B cell (primary cell): ENCODE measurements at regions of chr2 and their contacts with region 1.

Region 1: DNA sequence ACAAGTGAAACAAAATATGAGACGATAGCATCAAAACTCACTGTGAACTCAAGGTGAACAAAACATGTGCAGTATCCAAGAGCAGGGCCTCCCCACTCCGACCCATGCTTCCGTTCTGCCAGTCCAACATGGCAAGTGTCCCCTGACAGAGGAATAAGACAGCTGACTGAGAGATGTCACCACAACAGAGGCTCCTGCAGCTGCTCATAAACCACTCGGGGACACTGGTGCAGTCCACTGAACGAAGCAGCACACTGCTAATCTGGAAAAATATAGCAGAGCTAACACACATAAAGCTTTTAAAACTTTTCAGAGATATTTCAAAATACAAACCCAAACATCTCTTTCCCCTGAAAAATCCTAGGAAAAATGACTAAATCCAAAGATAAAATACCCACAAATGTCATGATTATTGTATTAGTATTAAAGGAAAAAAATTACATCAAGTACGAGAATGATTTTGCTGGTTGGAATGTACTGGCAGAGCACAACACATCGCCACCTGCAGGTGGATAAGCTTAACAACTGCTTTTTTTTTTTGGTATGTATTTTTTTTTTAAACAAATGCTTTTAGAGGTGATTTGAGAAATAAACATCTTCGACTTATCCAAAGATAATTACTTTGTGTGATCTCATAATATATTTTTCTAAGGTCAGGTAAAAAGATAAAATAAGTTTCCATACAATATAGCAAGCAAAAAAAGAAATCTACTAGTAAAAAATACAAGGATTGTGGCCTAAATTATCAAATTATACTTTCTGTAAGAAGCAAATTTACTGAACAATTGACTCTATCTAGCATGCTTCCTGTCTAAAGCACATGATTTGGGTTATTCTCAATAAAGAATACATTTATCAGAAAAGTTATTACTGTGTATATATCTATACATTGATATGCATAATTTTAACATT is 18.6 kb downstream of the THADA start:
- DNase-seq: peak; percentile 60
- ATAC-seq: no peak
- H3K4me3 ChIP-seq: no peak overlapping the region
- H3K4me3 Mint-ChIP-seq: no peak overlapping the region
- H3K27ac ChIP-seq: no peak overlapping the region
- H3K27ac Mint-ChIP-seq: no peak overlapping the region
- H3K4me1 ChIP-seq: no peaks in the 10 kb centered on the region
- H3K4me1 Mint-ChIP-seq: no peaks in the 10 kb centered on the region
- H3K27me3 ChIP-seq: no peaks in the 10 kb centered on the region
- H3K27me3 Mint-ChIP-seq: no peaks in the 10 kb centered on the region
- CTCF ChIP-seq: peak; percentile 95

Region 2: GRCh38 chr2:42828487-42829425 is 748.5 kb before region 1 on chr2:
- CTCF ChIA-PET with region 1: interaction called, 10 read pairs
- POLR2A ChIA-PET with region 1: no interaction called
- intact Hi-C with region 1: loop called (anchors 1 kb)
- DNase-seq: peak; percentile 82
- ATAC-seq: peak; percentile 95
- H3K4me3 ChIP-seq: no peak overlapping the region
- H3K4me3 Mint-ChIP-seq: peak overlapping the region; percentile 39
- H3K27ac ChIP-seq: no peak overlapping the region
- H3K27ac Mint-ChIP-seq: peak overlapping the region; percentile 26
- H3K4me1 ChIP-seq: peaks cover 8 to 13% of the 10 kb centered on the region in 2 donors
- H3K4me1 Mint-ChIP-seq: peaks cover 16% of the 10 kb centered on the region
- H3K27me3 ChIP-seq: no peaks in the 10 kb centered on the region
- H3K27me3 Mint-ChIP-seq: peaks cover 3% of the 10 kb centered on the region
- CTCF ChIP-seq: peak; percentile 92

Region 3: DNA sequence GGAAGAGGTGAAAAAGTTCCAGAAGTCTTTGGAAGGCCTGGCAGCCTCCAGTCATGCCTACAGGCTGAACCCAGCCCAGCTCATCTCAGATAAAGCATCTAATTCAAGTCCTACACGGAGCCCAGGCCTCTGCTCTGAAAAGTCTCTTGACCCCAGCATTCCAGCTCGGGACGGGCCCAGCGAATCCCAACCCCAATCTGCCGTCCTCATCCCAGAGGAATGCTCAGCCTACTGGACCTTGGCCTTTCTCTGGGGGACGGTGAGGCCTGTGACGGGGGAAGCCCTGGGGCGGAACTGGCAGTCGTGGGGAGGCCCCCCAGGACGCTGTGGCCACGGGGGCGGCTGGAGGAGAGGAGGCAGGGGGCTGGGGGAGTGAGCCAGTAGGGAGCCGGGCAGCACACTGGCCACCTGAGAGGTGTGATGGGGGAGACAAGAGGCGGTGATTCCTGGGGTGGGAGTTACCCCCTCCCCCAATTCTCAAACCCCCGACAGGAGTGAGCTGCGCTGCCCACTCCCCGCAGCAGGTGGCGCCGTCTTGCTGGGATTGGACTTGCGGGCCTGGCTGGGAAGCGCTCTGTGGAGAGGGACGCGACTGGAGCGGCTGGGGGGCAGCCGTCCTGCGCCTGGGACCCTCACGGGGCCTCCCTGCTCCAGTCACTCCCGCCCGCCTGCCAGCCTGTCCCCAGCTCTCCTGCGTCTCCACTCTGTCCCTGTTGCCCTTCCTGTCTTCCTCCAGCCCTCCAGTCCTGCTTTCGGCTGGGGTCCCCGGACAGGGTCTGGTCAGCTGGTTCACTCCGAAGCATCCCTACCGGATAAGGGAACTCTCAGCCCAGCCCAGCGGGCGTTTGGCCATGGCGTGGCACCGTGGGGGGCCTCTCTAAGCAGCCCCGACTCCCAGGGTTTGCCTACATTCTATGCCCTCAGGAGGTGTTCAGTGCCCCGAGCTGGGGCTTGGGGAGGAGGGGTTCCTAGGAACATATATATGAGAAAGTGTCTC is 602.2 kb before region 1 on chr2:
- CTCF ChIA-PET with region 1: interaction called, 10 read pairs
- POLR2A ChIA-PET with region 1: no interaction called
- intact Hi-C with region 1: no loop called
- DNase-seq: peak; percentile 69
- ATAC-seq: peak; percentile 78
- H3K4me3 ChIP-seq: no peak overlapping the region
- H3K4me3 Mint-ChIP-seq: peak overlapping the region; percentile 26
- H3K27ac ChIP-seq: no peak overlapping the region
- H3K27ac Mint-ChIP-seq: no peak overlapping the region
- H3K4me1 ChIP-seq: peaks cover 30 to 31% of the 10 kb centered on the region in 2 donors
- H3K4me1 Mint-ChIP-seq: peaks cover 35% of the 10 kb centered on the region
- H3K27me3 ChIP-seq: peaks cover 0 to 3% (median 0%) of the 10 kb centered on the region in 4 experiments
- H3K27me3 Mint-ChIP-seq: no peaks in the 10 kb centered on the region
- CTCF ChIP-seq: peak; percentile 75

Region 4: DNA sequence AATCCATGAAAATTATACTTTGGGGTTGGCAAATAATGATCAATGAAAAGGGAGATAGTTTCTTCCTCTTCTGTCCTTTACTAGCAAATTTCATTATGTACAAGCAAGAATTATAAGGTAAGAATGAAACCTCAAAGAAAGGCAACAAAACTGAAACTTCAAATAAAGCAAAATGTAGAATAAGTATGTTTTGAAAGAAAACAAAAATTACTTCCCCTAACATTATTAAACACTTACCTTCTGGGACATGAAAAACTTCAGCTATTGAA is 10.8 kb before region 1 on chr2:
- CTCF ChIA-PET with region 1: interaction called, 33 read pairs
- POLR2A ChIA-PET with region 1: no interaction called
- intact Hi-C with region 1: no loop called
- DNase-seq: no peak
- ATAC-seq: no peak
- H3K4me3 ChIP-seq: no peak overlapping the region
- H3K4me3 Mint-ChIP-seq: peak overlapping the region; percentile 5
- H3K27ac ChIP-seq: peak overlapping the region in 1 of 2 donors; percentile 47
- H3K27ac Mint-ChIP-seq: peak overlapping the region; percentile 28
- H3K4me1 ChIP-seq: peaks cover 3 to 7% of the 10 kb centered on the region in 2 donors
- H3K4me1 Mint-ChIP-seq: peaks cover 12% of the 10 kb centered on the region
- H3K27me3 ChIP-seq: no peaks in the 10 kb centered on the region
- H3K27me3 Mint-ChIP-seq: no peaks in the 10 kb centered on the region
- CTCF ChIP-seq: no peak

Region 5: GRCh38 chr2:44277541-44277940 is 700.3 kb after region 1 on chr2:
- CTCF ChIA-PET with region 1: no interaction called
- POLR2A ChIA-PET with region 1: no interaction called
- intact Hi-C with region 1: no loop called
- DNase-seq: no peak
- ATAC-seq: no peak
- H3K4me3 ChIP-seq: no peak overlapping the region
- H3K4me3 Mint-ChIP-seq: no peak overlapping the region
- H3K27ac ChIP-seq: no peak overlapping the region
- H3K27ac Mint-ChIP-seq: no peak overlapping the region
- H3K4me1 ChIP-seq: no peaks in the 10 kb centered on the region
- H3K4me1 Mint-ChIP-seq: no peaks in the 10 kb centered on the region
- H3K27me3 ChIP-seq: no peaks in the 10 kb centered on the region
- H3K27me3 Mint-ChIP-seq: peaks cover 8% of the 10 kb centered on the region
- CTCF ChIP-seq: no peak